Transverse colon (tissue), 4 donors: ENCODE measurements at regions of chr11 and their contacts with region 1.

Region 1: DNA sequence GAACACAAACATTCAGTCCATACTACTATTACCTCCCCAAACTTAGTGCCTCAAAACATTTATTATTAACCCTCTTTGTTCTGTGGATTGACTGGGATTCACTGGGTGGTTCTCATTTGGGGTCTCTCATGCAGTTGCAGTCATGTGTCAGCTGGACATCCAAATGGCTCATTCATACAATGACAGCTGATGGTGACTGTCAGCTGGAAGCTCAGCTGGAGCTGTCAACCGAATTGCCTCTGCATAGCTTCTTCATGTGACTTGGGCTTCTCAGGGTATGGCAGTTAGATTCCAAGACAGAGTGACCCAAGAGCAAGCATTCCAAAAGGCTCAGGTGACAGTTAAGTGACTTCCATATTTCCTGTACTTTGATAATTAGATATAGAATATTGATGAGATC is 85.2 kb downstream of the CCDC34 start:
- DNase-seq: no peak
- H3K4me3 ChIP-seq: no peak overlapping the region
- H3K27ac ChIP-seq: no peak overlapping the region
- H3K4me1 ChIP-seq: peaks cover 0 to 4% (median 0%) of the 10 kb centered on the region in 4 donors
- H3K27me3 ChIP-seq: no peaks in the 10 kb centered on the region
- CTCF ChIP-seq: no peak
- EP300 ChIP-seq: no peak
- POLR2A ChIP-seq: no peak

Region 2: GRCh38 chr11:27263046-27263445 is 14.8 kb before region 1 on chr11:
- in situ Hi-C with region 1: no loop called
- intact Hi-C with region 1: loop called (anchors 1 kb)
- DNase-seq: no peak
- H3K4me3 ChIP-seq: no peak overlapping the region
- H3K27ac ChIP-seq: no peak overlapping the region
- H3K4me1 ChIP-seq: no peaks in the 10 kb centered on the region
- H3K27me3 ChIP-seq: no peaks in the 10 kb centered on the region
- CTCF ChIP-seq: no peak
- EP300 ChIP-seq: no peak
- POLR2A ChIP-seq: no peak

Region 3: DNA sequence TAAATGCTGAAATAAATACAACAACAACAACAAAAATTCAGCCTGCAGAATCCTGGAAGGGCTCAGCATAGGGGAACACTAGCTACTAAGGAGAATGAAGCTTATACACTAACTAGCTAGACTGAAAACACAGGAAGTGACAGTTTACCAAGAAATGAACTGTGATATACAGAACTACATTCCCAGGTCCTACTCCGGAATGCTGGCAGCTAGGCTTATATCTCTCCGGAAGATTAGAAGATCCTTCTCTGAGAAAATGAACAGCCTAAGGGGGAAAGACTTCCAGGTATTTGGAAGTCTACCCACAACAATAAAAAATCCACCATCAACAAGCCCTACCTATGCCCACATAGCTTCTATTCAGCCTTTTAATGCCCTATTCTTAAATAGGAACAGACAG is 54.1 kb after region 1 on chr11:
- in situ Hi-C with region 1: no loop called
- intact Hi-C with region 1: no loop called
- DNase-seq: no peak
- H3K4me3 ChIP-seq: no peak overlapping the region
- H3K27ac ChIP-seq: no peak overlapping the region
- H3K4me1 ChIP-seq: peaks cover 0 to 4% (median 0%) of the 10 kb centered on the region in 4 donors
- H3K27me3 ChIP-seq: no peaks in the 10 kb centered on the region
- CTCF ChIP-seq: no peak
- EP300 ChIP-seq: no peak
- POLR2A ChIP-seq: no peak

Region 4: GRCh38 chr11:27934830-27935145 is 656.9 kb after region 1 on chr11:
- in situ Hi-C with region 1: no loop called
- intact Hi-C with region 1: loop called (anchors 10 kb)
- DNase-seq: no peak
- H3K4me3 ChIP-seq: no peak overlapping the region
- H3K27ac ChIP-seq: no peak overlapping the region
- H3K4me1 ChIP-seq: no peaks in the 10 kb centered on the region
- H3K27me3 ChIP-seq: no peaks in the 10 kb centered on the region
- CTCF ChIP-seq: no peak
- EP300 ChIP-seq: no peak
- POLR2A ChIP-seq: no peak